IMR-90 (cell line): ENCODE measurements at regions of chr3 and their contacts with region 1.

Region 1: GRCh38 chr3:150414258-150414657 is 6.2 kb downstream of the TSC22D2 start:
- DNase-seq: peak; percentile 58
- ATAC-seq: no peak
- H3K4me3 ChIP-seq: peak overlapping the region; percentile 54
- H3K27ac ChIP-seq: peak overlapping the region; percentile 13; the same call in 1 of the 2 replicates
- H3K4me1 ChIP-seq: peaks cover 5% of the 10 kb centered on the region
- H3K27me3 ChIP-seq: no peaks in the 10 kb centered on the region
- CTCF ChIP-seq: no peak
- POLR2A ChIP-seq: no peak
- RAD21 ChIP-seq: no peak

Region 2: DNA sequence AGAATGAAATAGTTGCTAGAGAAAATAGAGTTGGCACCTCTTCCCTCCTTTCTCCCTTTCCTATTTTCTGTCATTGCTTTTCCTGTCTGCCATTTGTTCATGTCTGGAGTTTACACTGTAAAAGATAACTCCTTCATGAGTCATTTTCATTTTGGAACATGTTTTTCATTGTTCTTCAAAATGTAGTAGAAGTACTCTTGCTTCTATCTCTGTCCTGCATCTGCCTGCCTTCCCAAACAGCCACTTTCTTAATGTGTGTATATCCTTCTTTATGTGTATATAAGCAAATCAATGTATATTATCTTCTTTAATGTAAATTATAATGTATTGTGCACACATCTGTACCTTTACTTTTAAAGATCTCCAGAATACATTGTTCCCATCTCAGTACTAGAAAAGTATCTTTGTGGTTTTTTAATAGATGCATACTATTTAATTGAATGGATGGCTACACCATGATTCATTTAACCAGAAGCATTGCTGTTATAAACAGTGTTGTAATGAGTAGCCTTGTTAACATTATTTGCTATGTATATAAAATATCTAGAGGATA is 35.0 kb after region 1 on chr3:
- CTCF ChIA-PET with region 1: no interaction called
- POLR2A ChIA-PET with region 1: no interaction called
- dilution Hi-C with region 1: no loop called
- in situ Hi-C with region 1: no loop called
- intact Hi-C with region 1: loop called (anchors 2 kb)
- DNase-seq: peak; percentile 85
- ATAC-seq: peak; percentile 81
- H3K4me3 ChIP-seq: no peak overlapping the region
- H3K27ac ChIP-seq: peak overlapping the region; percentile 51; the same call in 1 of the 2 replicates
- H3K4me1 ChIP-seq: peaks cover 12% of the 10 kb centered on the region
- H3K27me3 ChIP-seq: no peaks in the 10 kb centered on the region
- CTCF ChIP-seq: no peak
- POLR2A ChIP-seq: no peak
- RAD21 ChIP-seq: no peak

Region 3: GRCh38 chr3:150936693-150937092 is 522.4 kb after region 1 on chr3:
- CTCF ChIA-PET with region 1: no interaction called
- POLR2A ChIA-PET with region 1: no interaction called
- dilution Hi-C with region 1: no loop called
- in situ Hi-C with region 1: no loop called
- intact Hi-C with region 1: no loop called
- DNase-seq: no peak
- ATAC-seq: no peak
- H3K4me3 ChIP-seq: no peak overlapping the region
- H3K27ac ChIP-seq: no peak overlapping the region
- H3K4me1 ChIP-seq: no peaks in the 10 kb centered on the region
- H3K27me3 ChIP-seq: peaks cover 8% of the 10 kb centered on the region
- CTCF ChIP-seq: no peak
- POLR2A ChIP-seq: no peak
- RAD21 ChIP-seq: no peak